ENCODE measurements at regions of chr12 and their contacts with region 1.

Region 1: GRCh38 chr12:57904848-57905811 is 36.2 kb upstream of the ATP23 start:
- DNase-seq: no peak
- H3K4me3 ChIP-seq: no peak overlapping the region
- H3K27me3 ChIP-seq: no peaks in the 10 kb centered on the region
- CTCF ChIP-seq: peak; percentile 100

Region 2: DNA sequence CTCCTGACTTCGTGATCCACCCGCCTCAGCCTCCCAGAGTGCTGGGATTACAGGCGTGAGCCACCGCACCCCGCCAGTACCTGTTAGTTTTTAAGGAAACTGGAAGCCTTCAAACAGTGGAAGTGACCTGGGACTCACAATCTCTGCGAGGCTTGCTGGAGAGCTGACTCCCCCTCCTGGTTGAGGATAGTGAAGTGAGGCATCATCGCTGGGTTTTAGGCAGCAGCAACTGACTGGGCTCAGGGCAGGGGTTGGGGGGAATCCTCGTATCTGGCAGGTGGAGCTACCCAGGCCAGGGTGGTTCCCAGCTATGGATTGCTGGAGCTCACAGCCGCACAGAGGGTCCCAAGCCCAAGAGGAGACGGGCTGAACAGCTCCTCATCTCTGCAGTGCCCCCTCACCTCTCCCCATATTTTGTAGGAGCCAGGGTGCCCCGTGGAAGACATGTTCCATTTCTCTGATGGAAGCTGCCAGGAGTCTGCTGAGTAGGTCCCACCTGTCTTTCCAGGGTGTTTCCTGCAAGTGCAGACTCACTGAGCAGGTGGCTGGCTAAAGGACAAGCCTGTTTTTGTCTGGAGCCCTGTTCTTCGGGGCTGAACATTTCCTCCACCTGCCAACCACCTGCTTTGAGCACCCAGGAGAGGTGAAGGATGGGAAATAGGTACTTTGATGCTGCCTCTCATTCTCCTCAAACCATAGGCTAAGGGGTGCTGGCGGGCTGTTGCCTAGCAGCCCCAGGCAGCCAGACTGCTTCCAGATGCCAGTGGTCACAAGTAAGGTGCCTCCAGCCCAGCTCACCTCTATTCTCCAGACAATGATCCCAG is 89.7 kb before region 1 on chr12:
- CTCF ChIA-PET with region 1: interaction called, 10 read pairs
- POLR2A ChIA-PET with region 1: no interaction called
- DNase-seq: no peak
- H3K4me3 ChIP-seq: no peak overlapping the region
- H3K27me3 ChIP-seq: no peaks in the 10 kb centered on the region
- CTCF ChIP-seq: no peak

Region 3: DNA sequence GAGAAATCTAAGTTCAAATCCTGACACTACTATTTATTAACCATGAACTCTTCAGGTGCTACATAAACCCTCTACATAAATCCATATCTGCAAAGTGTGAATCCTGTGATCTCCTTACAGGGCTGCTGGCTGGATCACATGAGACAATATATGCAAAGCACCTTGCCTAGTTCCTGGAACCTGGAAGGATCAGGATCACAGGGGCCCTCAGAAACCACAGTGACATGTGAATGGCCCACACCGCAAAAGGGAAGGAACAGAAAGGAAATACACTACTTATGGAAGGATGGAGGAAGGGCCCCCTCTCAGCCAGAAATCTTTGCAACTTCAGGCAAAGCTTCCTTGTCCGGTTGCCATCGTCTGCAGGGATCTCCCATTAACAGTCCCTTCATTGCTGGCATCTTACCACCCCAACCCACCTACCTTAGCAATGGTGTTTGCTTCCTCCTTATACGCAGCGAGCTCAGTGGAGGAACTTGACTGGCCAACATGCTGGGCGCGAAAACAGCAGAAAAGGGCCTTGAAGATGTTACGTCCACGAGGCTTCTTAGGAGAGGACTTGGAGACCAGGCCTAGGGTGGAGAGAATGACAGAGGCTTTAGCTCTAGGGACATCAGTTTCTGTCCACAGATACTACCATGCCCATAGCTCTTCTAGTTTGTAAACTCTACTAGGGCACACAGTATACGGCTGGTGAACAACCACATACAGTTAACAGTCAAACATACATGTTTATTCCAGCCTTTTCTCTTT is 75.9 kb before region 1 on chr12:
- CTCF ChIA-PET with region 1: interaction called, 92 read pairs
- POLR2A ChIA-PET with region 1: no interaction called
- DNase-seq: no peak
- H3K4me3 ChIP-seq: no peak overlapping the region
- H3K27me3 ChIP-seq: no peaks in the 10 kb centered on the region
- CTCF ChIP-seq: no peak

Region 4: DNA sequence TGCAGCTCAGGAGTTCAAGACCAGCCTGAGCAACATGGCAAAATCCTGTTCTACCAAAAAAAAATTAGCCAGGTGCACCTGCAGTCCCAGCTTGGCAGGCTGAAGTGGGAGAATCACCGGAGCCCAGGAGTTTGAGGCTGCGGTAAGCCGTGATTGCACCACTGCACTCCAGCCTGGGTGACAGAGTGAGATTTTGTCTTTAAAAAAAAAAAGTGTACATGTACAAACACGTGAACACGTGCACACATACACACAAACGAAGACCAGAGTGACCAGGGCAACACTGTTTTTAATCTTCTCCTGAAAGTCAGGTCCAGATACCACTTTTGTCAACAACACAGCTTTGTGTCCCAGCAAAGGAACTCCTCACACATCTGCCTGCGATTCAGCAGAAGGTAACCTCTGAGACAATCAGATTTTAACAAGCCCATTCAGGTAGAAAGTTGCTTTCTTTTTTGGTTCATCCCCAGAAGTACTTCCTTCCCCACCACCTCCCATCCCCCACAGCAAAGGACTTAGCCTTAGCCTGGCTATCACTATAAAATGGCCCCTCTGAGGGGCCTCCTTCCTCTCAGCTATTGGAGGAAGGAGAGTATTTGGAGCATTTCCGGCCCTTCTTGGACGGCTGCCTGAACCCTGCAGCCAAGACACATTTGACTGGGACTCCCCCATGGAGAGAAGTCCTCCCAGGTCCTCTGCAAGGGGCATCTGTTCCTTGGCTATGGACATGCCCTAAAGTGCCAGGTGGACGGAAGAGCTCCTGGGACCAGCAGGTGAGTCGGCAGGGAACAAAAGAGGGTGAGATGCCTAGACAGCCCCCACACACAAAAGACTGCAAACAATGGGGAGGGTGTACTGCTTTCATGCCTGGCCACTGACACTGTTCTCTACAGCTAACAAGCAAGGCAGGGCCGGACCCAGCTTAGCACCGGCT is 68.4 kb before region 1 on chr12:
- CTCF ChIA-PET with region 1: interaction called, 92 read pairs
- POLR2A ChIA-PET with region 1: no interaction called
- DNase-seq: no peak
- H3K4me3 ChIP-seq: peak overlapping the region; percentile 12
- H3K27me3 ChIP-seq: no peaks in the 10 kb centered on the region
- CTCF ChIP-seq: no peak

Region 5: GRCh38 chr12:57993025-57993424 is 87.9 kb after region 1 on chr12:
- CTCF ChIA-PET with region 1: no interaction called
- POLR2A ChIA-PET with region 1: no interaction called
- DNase-seq: no peak
- H3K4me3 ChIP-seq: no peak overlapping the region
- H3K27me3 ChIP-seq: no peaks in the 10 kb centered on the region
- CTCF ChIP-seq: no peak

Region 6: DNA sequence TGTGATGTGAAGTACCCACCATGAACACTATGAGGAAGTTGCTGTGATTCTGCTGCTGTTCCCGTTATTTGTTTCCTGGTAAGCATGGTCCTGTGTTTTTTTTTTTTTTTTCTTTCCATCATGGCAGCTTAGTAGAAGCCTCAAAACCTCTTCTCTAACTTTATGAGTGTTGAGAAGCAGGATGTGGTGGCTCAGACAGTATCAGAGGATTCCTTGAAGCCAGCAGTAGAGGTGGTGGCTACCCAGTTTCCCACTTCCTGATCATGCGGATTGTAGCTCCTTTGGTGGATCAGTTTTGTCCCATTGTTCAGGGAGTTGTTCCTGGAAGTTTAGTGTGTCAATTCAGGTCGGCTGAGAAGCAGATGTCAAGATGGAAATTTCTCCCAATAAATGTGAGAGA is 212.1 kb after region 1 on chr12:
- CTCF ChIA-PET with region 1: no interaction called
- POLR2A ChIA-PET with region 1: no interaction called
- DNase-seq: no peak
- H3K4me3 ChIP-seq: no peak overlapping the region
- H3K27me3 ChIP-seq: no peaks in the 10 kb centered on the region
- CTCF ChIP-seq: no peak

Measured in BJ (cell line).